ENCODE measurements at regions of chr22 and their contacts with region 1.

Region 1: DNA sequence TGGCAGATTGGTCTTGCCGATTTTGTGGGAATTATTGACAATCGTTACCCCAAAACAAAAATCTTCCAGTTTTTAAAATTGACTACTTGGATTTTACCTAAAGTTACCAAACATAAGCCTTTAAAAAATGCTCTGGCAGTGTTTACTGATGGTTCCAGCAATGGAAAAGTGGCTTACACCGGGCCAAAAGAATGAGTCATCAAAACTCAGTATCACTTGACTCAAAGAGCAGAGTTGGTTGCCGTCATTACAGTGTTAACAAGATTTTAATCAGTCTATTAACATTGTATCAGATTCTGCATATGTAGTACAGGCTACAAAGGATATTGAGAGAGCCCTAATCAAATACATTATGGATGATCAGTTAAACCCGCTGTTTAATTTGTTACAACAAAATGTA is 37.2 kb downstream of the IGLL1 start:
- DNase-seq: no peak
- ATAC-seq: no peak
- H3K4me3 ChIP-seq: no peak overlapping the region
- H3K27ac ChIP-seq: no peak overlapping the region
- H3K4me1 ChIP-seq: peaks cover 0 to 5% of the 10 kb centered on the region in 2 donors
- H3K27me3 ChIP-seq: no peaks in the 10 kb centered on the region
- CTCF ChIP-seq: no peak

Region 2: GRCh38 chr22:23485490-23485889 is 57.4 kb before region 1 on chr22:
- intact Hi-C with region 1: no loop called
- DNase-seq: no peak
- ATAC-seq: no peak
- H3K4me3 ChIP-seq: no peak overlapping the region
- H3K27ac ChIP-seq: no peak overlapping the region
- H3K4me1 ChIP-seq: no peaks in the 10 kb centered on the region
- H3K27me3 ChIP-seq: no peaks in the 10 kb centered on the region
- CTCF ChIP-seq: no peak

Region 3: DNA sequence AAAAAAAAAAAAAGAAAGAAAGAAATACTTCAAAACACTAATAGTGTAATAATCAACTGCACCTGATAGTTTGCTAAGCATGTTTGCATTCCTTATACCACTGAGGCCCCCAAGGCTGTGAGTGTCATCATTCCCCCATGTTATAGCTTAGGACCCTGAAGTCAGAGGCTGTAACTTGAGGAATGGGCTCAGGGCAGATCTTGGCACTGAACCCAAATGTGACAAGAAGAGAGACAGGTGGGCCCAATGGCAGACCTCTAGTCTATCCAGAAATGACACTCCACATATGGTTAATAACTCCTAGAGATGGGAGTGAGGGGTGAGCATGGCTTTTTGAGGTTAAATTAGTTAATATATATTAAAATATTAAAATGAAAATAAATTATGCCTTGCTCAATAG is 194.8 kb after region 1 on chr22:
- intact Hi-C with region 1: no loop called
- DNase-seq: no peak
- ATAC-seq: no peak
- H3K4me3 ChIP-seq: no peak overlapping the region
- H3K27ac ChIP-seq: no peak overlapping the region
- H3K4me1 ChIP-seq: no peaks in the 10 kb centered on the region
- H3K27me3 ChIP-seq: no peaks in the 10 kb centered on the region
- CTCF ChIP-seq: no peak

Region 4: GRCh38 chr22:23849009-23850006 is 306.4 kb after region 1 on chr22:
- intact Hi-C with region 1: loop called in 1 of 2 experiments (anchors 10 kb)
- DNase-seq: peak; percentile 67 to 98 (median 83)
- ATAC-seq: peak; percentile 95
- H3K4me3 ChIP-seq: no peak overlapping the region
- H3K27ac ChIP-seq: no peak overlapping the region
- H3K4me1 ChIP-seq: peaks cover 11 to 20% of the 10 kb centered on the region in 2 donors
- H3K27me3 ChIP-seq: peaks cover 0 to 7% of the 10 kb centered on the region in 2 donors
- CTCF ChIP-seq: peak; percentile 97 to 98